ENCODE measurements at regions of chr10 and their contacts with region 1.

Region 1: GRCh38 chr10:102394079-102394800 is 1.3 kb upstream of the NFKB2 start:
- DNase-seq: peak; percentile 99
- ATAC-seq: peak; percentile 87
- H3K4me3 Mint-ChIP-seq: peak overlapping the region; percentile 95
- H3K27ac Mint-ChIP-seq: peak overlapping the region; percentile 99
- H3K4me1 Mint-ChIP-seq: peaks cover 41% of the 10 kb centered on the region
- H3K27me3 Mint-ChIP-seq: no peaks in the 10 kb centered on the region

Region 2: GRCh38 chr10:102114861-102115618 is 279.2 kb before region 1 on chr10:
- CTCF ChIA-PET with region 1: no interaction called
- POLR2A ChIA-PET with region 1: no interaction called
- intact Hi-C with region 1: loop called (anchors 1 to 2 kb)
- DNase-seq: peak; percentile 95
- ATAC-seq: peak; percentile 60
- H3K4me3 Mint-ChIP-seq: peak overlapping the region; percentile 81
- H3K27ac Mint-ChIP-seq: peak overlapping the region; percentile 97
- H3K4me1 Mint-ChIP-seq: peaks cover 55% of the 10 kb centered on the region
- H3K27me3 Mint-ChIP-seq: no peaks in the 10 kb centered on the region

Region 3: DNA sequence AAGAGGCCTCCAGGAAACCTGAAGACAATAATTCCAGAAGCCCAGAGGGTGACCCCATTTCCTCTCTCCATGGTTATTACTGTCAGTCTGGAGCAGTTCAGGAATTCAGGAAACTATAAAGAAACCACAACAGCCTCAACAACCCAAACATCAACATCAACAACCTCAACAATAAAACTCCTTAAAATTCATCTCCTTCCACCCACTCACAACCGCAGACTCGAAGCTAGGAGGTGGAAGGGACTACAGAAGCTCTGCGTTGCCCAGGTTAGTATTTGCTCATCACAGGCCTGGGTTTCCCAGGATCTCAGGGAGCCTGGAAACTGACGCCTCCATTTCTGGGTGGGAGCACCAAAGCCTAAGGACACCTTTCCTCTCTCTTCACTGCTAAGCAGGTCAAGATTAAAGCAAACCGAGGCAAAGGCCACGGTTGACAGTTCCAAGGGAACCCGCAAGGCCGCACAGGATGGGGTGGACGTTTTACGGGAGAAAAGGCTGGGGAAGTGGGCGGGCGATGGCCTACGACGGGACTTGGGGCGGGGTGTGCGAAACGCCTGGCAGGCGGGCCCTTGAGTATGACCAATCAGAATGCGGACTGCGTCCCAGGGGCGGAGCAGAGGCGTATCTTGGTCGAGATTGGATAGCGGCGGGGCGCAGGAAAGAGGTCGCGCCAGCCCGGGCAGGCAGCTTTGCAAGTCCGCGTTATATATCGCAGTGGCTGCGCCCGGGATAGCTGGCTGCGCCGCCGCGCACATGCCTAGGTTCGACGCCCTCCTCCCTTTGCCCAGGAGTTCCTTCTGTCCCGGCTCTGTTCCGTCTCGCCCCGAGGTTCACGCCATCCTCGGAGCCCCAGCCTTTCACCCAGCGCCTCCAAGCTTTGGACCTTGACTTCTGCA is 168.3 kb before region 1 on chr10 and contains the start of gene ELOVL3:
- CTCF ChIA-PET with region 1: interaction called, 39 read pairs
- POLR2A ChIA-PET with region 1: no interaction called
- intact Hi-C with region 1: loop called (anchors 1 to 2 kb)
- DNase-seq: peak; percentile 91
- ATAC-seq: peak; percentile 91
- H3K4me3 Mint-ChIP-seq: peak within 1 kb of the TSS; percentile 38
- H3K27ac Mint-ChIP-seq: no peak within 1 kb of the TSS
- H3K4me1 Mint-ChIP-seq: peaks cover 24% of the 10 kb centered on the region
- H3K27me3 Mint-ChIP-seq: peaks cover 39% of the 10 kb centered on the region
- total RNA-seq, gene ELOVL3: 0.14 TPM in 1 of 2 experiments, not detected in the other

Region 4: DNA sequence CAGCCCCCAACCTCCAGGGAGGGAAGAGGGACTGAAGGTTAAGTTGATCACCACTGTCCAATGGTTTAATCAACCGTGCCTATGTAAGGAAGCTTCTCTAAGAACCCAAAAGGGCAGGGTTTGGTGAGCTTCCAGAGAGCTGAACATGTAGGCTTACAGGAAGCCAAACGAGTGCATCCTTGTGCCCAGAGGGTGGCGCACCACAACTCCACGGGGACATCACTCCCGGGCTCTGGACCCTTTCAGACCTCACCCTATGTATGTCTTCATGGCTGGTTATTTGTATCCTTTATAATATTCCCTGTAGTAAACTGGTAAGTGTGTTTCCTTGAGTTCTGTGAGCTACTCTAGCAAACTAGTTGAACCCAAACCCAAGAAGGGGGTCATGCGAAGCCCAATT is 10.2 kb before region 1 on chr10:
- CTCF ChIA-PET with region 1: interaction called, 24 read pairs
- POLR2A ChIA-PET with region 1: interaction called, 4 read pairs
- intact Hi-C with region 1: no loop called
- DNase-seq: peak; percentile 51
- ATAC-seq: peak; percentile 64
- H3K4me3 Mint-ChIP-seq: no peak overlapping the region
- H3K27ac Mint-ChIP-seq: no peak overlapping the region
- H3K4me1 Mint-ChIP-seq: peaks cover 2% of the 10 kb centered on the region
- H3K27me3 Mint-ChIP-seq: no peaks in the 10 kb centered on the region

Region 5: DNA sequence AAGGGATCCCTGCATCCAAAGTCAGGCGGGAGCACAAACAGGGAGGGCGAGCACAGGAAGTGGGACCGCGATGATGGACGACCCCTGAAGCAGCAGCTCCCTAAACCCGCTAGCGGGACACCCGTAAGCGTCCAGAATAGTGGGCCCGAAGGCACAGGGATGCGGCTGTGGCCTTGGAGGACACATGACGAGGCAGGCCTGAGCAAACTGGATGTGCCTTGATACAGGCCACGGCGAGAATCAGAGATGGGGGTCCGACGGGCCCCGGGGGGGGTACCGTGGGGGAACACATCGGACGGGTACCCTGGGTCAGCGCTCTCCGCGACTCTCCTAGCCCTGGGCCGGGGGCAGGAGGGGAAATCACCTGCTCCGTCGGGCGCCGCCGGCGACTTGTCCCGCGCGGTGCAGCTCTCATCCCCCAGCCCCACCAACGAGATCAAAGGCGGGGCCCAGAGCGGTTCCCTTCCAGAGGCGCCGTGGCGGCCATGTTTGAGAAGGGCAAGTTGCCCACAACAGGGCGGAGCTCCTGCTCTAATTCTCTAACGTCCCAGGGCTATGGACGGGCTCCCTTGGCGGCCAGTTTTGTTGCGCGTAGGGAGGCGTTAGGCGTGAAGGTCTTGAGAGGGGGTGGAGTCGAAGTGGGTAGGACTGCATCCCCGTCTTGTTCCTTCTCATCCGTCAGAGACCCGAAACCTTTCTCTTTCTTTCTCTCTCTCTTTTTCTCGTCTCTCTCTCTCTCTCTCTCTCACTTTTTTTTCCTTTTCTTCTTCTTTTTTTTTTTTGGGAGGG is 38.1 kb after region 1 on chr10 and contains the start of gene CUEDC2:
- CTCF ChIA-PET with region 1: interaction called, 5 read pairs
- POLR2A ChIA-PET with region 1: interaction called, 5 read pairs
- intact Hi-C with region 1: loop called (anchors 1 to 5 kb)
- DNase-seq: peak; percentile 99
- ATAC-seq: peak; percentile 94
- H3K4me3 Mint-ChIP-seq: peak within 1 kb of the TSS; percentile 85
- H3K27ac Mint-ChIP-seq: peak within 1 kb of the TSS; percentile 94
- H3K4me1 Mint-ChIP-seq: peaks cover 42% of the 10 kb centered on the region
- H3K27me3 Mint-ChIP-seq: no peaks in the 10 kb centered on the region
- total RNA-seq, gene CUEDC2: 60.8 to 72.7 TPM

Region 6: DNA sequence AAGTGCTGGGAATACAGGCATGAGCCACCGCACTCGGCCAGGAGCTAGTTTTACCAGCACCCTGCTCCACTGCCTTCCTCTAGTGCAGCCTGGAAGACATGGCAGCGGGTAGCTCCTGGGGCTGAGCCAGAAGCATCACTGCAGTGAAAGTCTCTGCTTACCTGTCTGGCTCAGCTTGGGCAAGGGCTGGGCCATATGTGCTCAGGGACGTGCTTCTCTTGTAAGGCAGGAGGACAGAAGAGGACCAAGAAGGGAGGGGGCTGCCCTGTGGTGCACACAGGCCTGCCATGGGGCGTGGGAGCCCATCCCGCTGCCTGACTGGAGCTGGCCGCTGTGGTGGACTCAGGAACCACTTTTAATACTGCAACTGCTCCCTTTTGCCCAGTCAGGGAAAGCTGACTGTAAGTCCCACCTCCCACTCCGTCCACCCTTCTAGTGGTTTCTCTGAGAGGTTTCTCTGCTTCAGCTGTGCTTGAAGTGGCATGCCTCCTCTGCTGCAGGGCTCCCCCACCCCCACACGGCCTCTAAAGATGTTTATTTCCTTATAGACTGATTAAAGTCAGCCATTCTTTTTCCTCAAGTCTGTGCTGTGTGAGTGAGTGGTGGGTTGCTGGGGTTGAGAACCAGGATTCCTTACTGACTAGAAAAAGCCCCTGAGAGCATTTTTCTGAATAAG is 82.4 kb after region 1 on chr10:
- CTCF ChIA-PET with region 1: interaction called, 16 read pairs
- POLR2A ChIA-PET with region 1: interaction called, 4 read pairs
- intact Hi-C with region 1: loop called (anchors 1 kb)
- DNase-seq: peak; percentile 36
- ATAC-seq: no peak
- H3K4me3 Mint-ChIP-seq: no peak overlapping the region
- H3K27ac Mint-ChIP-seq: peak overlapping the region; percentile 78
- H3K4me1 Mint-ChIP-seq: peaks cover 28% of the 10 kb centered on the region
- H3K27me3 Mint-ChIP-seq: no peaks in the 10 kb centered on the region

Region 7: GRCh38 chr10:103295374-103296015 is 901.3 kb after region 1 on chr10:
- CTCF ChIA-PET with region 1: no interaction called
- POLR2A ChIA-PET with region 1: no interaction called
- intact Hi-C with region 1: no loop called
- DNase-seq: no peak
- ATAC-seq: no peak
- H3K4me3 Mint-ChIP-seq: no peak overlapping the region
- H3K27ac Mint-ChIP-seq: no peak overlapping the region
- H3K4me1 Mint-ChIP-seq: no peaks in the 10 kb centered on the region
- H3K27me3 Mint-ChIP-seq: peaks cover 7% of the 10 kb centered on the region

Measured in activated CD4-positive, alpha-beta T cell treated with anti-CD3 and anti-CD28 coated beads for 36 hours (primary cell).